ENCODE measurements at regions of chr17 and their contacts with region 1.

Region 1: DNA sequence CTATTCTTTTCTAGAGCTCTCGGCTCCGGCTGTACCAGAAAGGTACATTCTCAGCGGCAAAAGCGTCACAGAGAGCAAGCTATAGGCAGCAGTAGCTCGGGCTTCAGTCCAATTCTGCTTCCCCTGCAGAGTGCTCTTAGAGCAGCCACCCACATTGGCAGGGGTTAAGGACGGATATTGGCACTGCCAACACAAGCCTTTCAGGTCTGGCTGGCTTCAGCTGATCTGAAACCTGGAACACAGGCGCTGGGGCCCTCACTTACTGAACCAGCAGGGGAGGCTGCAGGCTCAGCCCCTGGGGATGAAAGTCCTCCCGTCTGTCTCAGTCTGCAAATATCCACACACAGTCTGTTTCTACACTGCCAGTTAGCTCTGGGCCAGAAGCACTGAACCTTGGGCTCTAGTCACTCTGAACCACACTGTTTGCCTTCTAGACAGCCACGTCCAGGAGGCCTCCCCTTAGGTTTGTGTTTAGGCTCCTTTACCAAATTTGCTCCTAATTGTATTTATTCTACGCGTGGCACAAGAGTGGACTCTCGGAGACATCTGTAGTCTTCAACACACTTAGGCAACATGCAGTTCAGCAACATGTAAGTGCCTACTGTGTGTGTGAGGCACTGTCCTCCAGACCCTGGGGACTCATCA is 40.1 kb downstream of the HIC1 start:
- DNase-seq: peak; percentile 64 to 87 (median 87)
- ATAC-seq: peak; percentile 82 to 89
- H3K4me3 ChIP-seq: no peak overlapping the region
- H3K27ac ChIP-seq: peak overlapping the region; percentile 3
- H3K4me1 ChIP-seq: peaks cover 7% of the 10 kb centered on the region
- H3K27me3 ChIP-seq: no peaks in the 10 kb centered on the region

Region 2: GRCh38 chr17:2054512-2055291 is 40.3 kb before region 1 on chr17 and contains the start of gene HIC1:
- intact Hi-C with region 1: loop called in 1 of 4 experiments (anchors 2 kb)
- DNase-seq: peak; percentile 85 to 95 (median 93)
- ATAC-seq: peak; percentile 67 to 68
- H3K4me3 ChIP-seq: peak within 1 kb of the TSS; percentile 81
- H3K27ac ChIP-seq: peak within 1 kb of the TSS; percentile 69
- H3K4me1 ChIP-seq: no peaks in the 10 kb centered on the region
- H3K27me3 ChIP-seq: no peaks in the 10 kb centered on the region
- total RNA-seq, gene HIC1: 16.9 to 33.0 (median 24.7) TPM

Region 3: GRCh38 chr17:2172077-2172851 is 77.3 kb after region 1 on chr17:
- intact Hi-C with region 1: loop called in 1 of 4 experiments (anchors 10 kb)
- DNase-seq: peak; percentile 76 to 92 (median 90)
- ATAC-seq: peak; percentile 84 to 86
- H3K4me3 ChIP-seq: peak overlapping the region; percentile 2
- H3K27ac ChIP-seq: peak overlapping the region; percentile 98
- H3K4me1 ChIP-seq: peaks cover 29% of the 10 kb centered on the region
- H3K27me3 ChIP-seq: no peaks in the 10 kb centered on the region

Region 4: DNA sequence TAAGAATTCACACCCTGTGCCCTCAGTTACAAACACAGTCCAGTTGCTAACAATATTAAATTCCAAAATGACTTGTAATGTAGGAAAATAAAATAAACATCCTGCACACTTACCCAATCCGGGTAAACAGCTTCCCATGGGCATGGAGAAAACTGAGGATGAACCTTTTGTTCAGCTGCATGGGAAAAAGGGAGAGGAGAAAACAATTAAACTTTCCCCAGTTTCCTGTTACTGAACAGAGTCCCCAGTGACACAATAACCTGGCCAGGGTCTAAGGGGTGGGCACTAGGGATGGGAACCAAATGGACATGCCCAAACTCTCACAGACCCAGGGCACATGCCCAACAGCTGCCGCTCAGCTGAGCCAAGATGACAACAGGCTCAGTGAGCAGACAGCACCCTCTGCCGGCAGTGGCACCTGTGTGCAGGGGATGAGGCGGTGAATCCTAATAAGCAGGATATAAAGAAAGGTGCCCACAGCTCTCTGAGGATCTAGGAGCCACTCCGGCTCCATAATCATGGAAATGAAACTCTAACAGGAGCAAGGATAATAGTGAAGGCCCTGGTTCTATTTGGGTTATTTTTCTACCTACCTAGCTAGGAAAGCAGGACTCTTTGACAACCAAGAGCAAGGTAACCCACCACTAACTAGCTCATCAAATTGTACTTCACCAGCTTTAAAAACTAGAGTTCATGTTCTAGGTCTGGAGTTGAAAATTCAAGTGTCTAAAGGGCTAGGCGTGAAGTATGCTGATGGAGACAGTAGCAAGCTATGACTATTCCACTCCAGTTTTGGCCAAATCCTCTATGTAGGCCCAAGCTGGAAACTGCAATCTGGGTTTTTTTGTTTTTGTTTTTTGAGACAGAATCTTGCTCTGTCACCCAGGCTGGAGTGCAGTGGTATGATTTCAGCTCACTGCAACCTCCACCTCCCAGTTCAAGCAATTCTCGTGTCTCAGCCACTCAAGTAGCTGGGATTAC is 149.8 kb after region 1 on chr17:
- intact Hi-C with region 1: loop called in 1 of 4 experiments (anchors 5 kb)
- DNase-seq: peak; percentile 89 to 95 (median 95)
- ATAC-seq: peak; percentile 90 to 91
- H3K4me3 ChIP-seq: no peak overlapping the region
- H3K27ac ChIP-seq: peak overlapping the region; percentile 26
- H3K4me1 ChIP-seq: no peaks in the 10 kb centered on the region
- H3K27me3 ChIP-seq: no peaks in the 10 kb centered on the region